ENCODE measurements at regions of chr4 and their contacts with region 1.

Region 1: DNA sequence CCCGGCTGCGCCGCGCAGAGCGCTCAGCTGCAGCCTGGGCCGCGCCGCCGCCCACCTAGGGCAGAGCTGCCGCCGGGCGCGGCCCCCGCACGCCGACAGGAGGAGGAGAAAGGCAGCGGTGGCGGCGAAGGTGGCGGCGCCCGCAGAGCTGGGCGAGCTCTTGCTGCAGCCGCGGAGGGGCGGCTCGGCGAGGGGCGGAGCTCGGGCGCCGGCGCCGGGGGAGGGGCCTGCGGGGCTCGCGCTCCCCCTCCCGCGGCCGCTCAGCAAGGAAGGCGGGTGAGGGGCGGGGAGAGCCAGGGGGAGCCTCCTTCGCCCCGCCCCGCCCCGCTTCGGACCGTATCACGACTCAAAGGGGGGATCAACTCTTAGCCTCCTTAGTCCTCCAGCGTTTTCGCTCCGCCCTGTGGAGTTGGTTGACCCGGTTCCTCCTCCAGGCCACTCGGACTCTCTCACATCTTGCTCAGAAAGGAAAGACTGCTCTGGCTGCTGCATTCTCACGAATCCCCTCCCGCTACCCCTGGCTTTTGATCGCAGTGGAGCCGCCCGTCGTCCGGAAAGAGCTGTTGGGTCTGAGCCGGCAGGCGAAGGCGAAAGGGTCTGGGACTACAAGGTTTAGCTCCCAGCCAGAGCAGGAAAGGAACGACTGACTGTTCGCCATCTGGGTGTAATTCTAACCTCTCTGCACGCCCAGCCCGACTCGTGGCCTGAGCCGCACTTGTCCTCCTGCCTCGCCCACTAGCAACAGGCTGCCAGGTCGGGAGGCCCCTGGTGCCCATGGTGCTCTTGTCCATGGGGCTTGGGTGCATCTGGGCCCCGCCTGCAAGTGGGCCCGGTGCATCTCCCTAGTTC is at the start of gene ATP8A1:
- DNase-seq: peak; percentile 95
- H3K4me3 ChIP-seq: peak within 1 kb of the TSS; percentile 98
- H3K27ac ChIP-seq: peak within 1 kb of the TSS; percentile 75
- H3K4me1 ChIP-seq: peaks cover 32% of the 10 kb centered on the region
- CTCF ChIP-seq: no peak
- total RNA-seq, gene ATP8A1: 76.7 and 80.0 TPM in 2 replicates

Region 2: GRCh38 chr4:42104521-42104920 is 552.6 kb before region 1 on chr4:
- CTCF ChIA-PET with region 1: no interaction called
- POLR2A ChIA-PET with region 1: no interaction called
- intact Hi-C with region 1: no loop called
- DNase-seq: no peak
- H3K4me3 ChIP-seq: no peak overlapping the region
- H3K27ac ChIP-seq: no peak overlapping the region
- H3K4me1 ChIP-seq: no peaks in the 10 kb centered on the region
- CTCF ChIP-seq: no peak

Region 3: GRCh38 chr4:42568610-42569207 is 88.5 kb before region 1 on chr4:
- CTCF ChIA-PET with region 1: interaction called, 6 read pairs
- POLR2A ChIA-PET with region 1: interaction called, 4 read pairs
- intact Hi-C with region 1: loop called (anchors 1 kb)
- DNase-seq: peak; percentile 84
- H3K4me3 ChIP-seq: no peak overlapping the region
- H3K27ac ChIP-seq: peak overlapping the region; percentile 10
- H3K4me1 ChIP-seq: peaks cover 10% of the 10 kb centered on the region
- CTCF ChIP-seq: peak; percentile 97

Region 4: DNA sequence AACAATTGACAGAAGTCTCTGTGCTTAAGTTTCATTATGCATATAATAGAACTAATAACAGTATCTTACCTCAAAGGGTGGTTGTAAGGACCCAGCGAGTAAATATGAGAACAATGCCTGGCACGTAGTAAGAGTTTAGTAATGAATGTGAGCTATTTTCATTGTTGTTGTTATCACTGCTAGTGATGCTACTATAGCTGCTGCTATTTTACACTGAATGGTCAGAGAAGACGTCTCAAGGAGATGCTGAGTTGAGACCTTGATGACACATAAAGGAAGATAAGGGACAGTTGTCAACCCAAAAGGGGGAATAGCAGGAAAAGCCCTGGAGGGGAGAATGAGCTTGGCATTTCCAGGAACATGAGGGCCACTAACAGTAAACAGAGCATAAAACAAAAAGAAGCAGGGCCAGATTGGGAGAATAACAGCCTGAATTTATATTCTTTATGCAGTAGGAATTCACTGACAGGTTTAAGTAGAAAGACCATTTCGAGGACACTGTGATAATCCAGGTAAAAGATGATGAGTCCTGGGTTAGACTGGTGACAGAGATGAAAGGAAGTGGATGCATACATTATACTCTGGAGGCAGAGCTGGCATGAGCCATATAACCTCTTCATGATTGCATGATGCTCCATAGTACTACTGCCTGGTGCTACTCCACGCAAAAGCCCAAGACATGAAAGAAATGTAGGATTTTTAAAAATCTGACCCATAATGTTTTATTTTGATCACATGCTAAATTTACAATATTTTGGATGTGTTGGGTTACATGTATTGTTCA is 23.4 kb before region 1 on chr4:
- CTCF ChIA-PET with region 1: interaction called, 9 read pairs
- POLR2A ChIA-PET with region 1: interaction called, 132 read pairs
- intact Hi-C with region 1: no loop called
- DNase-seq: no peak
- H3K4me3 ChIP-seq: peak overlapping the region; percentile 18
- H3K27ac ChIP-seq: peak overlapping the region; percentile 33
- H3K4me1 ChIP-seq: peaks cover 99% of the 10 kb centered on the region
- CTCF ChIP-seq: no peak

Region 5: GRCh38 chr4:42646013-42646784 is 11.0 kb before region 1 on chr4:
- CTCF ChIA-PET with region 1: interaction called, 9 read pairs
- POLR2A ChIA-PET with region 1: interaction called, 132 read pairs
- intact Hi-C with region 1: loop called (anchors 1 kb)
- DNase-seq: no peak
- H3K4me3 ChIP-seq: peak overlapping the region; percentile 65
- H3K27ac ChIP-seq: peak overlapping the region; percentile 99
- H3K4me1 ChIP-seq: peaks cover 89% of the 10 kb centered on the region
- CTCF ChIP-seq: no peak

Region 6: DNA sequence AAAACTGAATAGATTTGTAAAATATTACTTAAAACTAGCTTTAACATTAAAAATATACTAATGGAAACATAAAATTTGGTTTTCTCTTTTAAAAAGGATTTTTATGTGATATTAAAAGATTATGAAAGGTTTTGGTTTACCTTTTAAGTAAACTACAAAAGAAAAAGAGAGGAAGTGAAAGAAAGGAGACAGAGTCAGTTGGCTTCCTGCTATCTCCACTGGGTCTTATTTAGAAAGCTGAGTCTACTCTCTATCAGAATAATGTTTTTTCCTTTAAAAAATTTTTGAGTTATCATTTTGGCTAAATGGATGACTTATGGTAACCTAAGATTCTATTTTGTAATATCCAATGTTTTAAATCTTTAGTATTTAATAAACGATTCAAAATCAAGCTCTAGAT is 21.3 kb after region 1 on chr4:
- CTCF ChIA-PET with region 1: interaction called, 5 read pairs
- POLR2A ChIA-PET with region 1: interaction called, 51 read pairs
- intact Hi-C with region 1: no loop called
- DNase-seq: peak; percentile 65
- H3K4me3 ChIP-seq: peak overlapping the region; percentile 15
- H3K27ac ChIP-seq: peak overlapping the region; percentile 64
- H3K4me1 ChIP-seq: peaks cover 23% of the 10 kb centered on the region
- CTCF ChIP-seq: no peak